Activated CD4-positive, alpha-beta memory T cell treated with anti-CD3 and anti-CD28 coated beads for 36 hours (primary cell): ENCODE measurements at regions of chr7 and their contacts with region 1.

Region 1: DNA sequence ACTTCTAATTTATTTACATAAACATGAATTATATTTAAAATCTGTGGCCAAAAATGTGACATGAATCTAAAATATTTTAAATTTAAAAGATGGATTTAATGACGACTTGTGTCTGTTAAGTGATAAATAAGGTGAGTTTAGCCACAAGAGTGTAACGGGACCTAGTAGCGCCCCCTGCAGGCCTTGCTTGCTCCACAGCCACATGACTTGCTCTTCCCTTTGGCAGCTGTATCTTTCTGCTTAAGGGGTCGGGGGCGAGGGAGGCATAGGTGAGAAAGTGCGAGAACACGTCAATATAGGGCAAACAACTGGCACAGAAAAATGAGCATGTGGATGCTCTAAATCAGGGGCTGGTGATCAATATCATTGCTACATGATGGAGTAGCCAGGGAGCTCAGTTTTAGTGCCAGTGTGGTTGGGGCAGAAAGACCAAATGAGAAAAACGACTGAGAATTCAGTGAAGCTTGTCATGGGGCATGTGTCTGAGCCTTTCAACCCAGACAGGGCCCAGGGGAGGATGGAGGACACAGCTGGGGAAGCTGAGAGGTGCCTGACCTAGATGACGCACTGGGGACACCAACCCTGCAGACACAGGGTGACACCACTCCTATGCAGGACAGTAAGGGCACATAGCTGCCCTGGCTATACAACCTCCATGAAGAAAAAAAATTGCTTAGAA is 49.8 kb downstream of the PAXIP1 start:
- DNase-seq: peak; percentile 78
- H3K4me3 Mint-ChIP-seq: no peak overlapping the region
- H3K27ac Mint-ChIP-seq: no peak overlapping the region
- H3K4me1 Mint-ChIP-seq: no peaks in the 10 kb centered on the region
- H3K27me3 Mint-ChIP-seq: no peaks in the 10 kb centered on the region

Region 2: GRCh38 chr7:154913638-154914312 is 39.4 kb before region 1 on chr7:
- CTCF ChIA-PET with region 1: interaction called, 45 read pairs
- POLR2A ChIA-PET with region 1: no interaction called
- intact Hi-C with region 1: no loop called
- DNase-seq: peak; percentile 90
- H3K4me3 Mint-ChIP-seq: peak overlapping the region; percentile 59
- H3K27ac Mint-ChIP-seq: no peak overlapping the region
- H3K4me1 Mint-ChIP-seq: peaks cover 4% of the 10 kb centered on the region
- H3K27me3 Mint-ChIP-seq: peaks cover 28% of the 10 kb centered on the region

Region 3: DNA sequence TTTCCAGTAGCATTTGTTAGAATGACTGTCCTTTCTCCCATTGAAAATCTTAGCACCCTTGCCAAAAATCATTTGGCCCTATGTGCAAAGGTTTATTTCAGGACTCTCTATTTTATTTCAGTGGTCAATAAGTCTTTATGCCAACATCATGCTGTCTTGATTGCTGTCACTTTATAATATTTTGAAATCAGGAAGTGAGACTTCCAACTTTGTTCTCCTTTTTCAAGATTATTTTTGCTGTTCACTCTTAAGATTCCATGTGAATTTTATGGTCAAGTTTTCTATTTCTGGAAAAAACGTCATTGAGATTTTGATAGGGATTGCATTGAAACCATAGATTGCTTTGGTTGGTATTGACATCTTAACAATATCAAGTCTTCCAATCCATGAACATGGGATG is 15.3 kb before region 1 on chr7:
- CTCF ChIA-PET with region 1: interaction called, 40 read pairs
- POLR2A ChIA-PET with region 1: no interaction called
- intact Hi-C with region 1: no loop called
- DNase-seq: no peak
- H3K4me3 Mint-ChIP-seq: no peak overlapping the region
- H3K27ac Mint-ChIP-seq: no peak overlapping the region
- H3K4me1 Mint-ChIP-seq: peaks cover 2% of the 10 kb centered on the region
- H3K27me3 Mint-ChIP-seq: no peaks in the 10 kb centered on the region

Region 4: DNA sequence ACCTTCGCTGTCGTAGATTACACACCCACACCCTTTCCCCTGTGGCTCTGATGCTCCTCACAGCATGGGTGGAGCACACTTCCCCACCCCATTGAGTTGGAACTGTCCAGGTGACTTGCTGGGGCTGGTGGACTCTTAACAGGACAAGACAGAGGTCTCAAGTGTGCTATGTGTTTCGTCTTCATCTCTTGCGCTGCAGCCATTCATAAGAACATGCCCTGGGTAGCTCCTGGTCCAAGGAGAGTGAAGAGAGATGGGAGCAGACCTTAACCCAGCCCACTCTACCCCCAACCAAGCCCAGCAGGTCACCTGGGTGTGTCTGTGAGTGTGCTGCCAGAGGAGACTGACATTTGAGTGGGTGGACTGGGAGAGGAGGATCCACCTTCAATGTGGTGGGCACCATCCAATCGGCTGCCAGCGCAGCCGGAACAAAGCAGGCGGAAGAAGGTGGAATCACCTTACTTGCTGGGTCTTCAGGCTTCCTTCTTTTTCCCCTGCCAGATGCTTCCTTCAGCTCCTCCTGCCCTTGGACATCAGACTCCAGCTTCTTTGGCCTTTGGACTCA is 229.3 kb after region 1 on chr7:
- CTCF ChIA-PET with region 1: no interaction called
- POLR2A ChIA-PET with region 1: no interaction called
- intact Hi-C with region 1: no loop called
- DNase-seq: no peak
- H3K4me3 Mint-ChIP-seq: no peak overlapping the region
- H3K27ac Mint-ChIP-seq: no peak overlapping the region
- H3K4me1 Mint-ChIP-seq: no peaks in the 10 kb centered on the region
- H3K27me3 Mint-ChIP-seq: peaks cover 15% of the 10 kb centered on the region

Region 5: GRCh38 chr7:155298834-155299534 is 345.8 kb after region 1 on chr7:
- CTCF ChIA-PET with region 1: no interaction called
- POLR2A ChIA-PET with region 1: no interaction called
- intact Hi-C with region 1: no loop called
- DNase-seq: peak; percentile 98
- H3K4me3 Mint-ChIP-seq: peak overlapping the region; percentile 93
- H3K27ac Mint-ChIP-seq: peak overlapping the region; percentile 96
- H3K4me1 Mint-ChIP-seq: peaks cover 38% of the 10 kb centered on the region
- H3K27me3 Mint-ChIP-seq: no peaks in the 10 kb centered on the region